ENCODE measurements at regions of chr11 and their contacts with region 1.

Region 1: GRCh38 chr11:2888266-2888968 is 2.8 kb upstream of the CDKN1C start:
- DNase-seq: peak; percentile 97
- H3K4me3 ChIP-seq: peak overlapping the region in 1 of 8 donors; percentile 4
- H3K27ac ChIP-seq: no peak overlapping the region
- H3K4me1 ChIP-seq: peaks cover 14 to 80% (median 57%) of the 10 kb centered on the region in 6 donors
- H3K27me3 ChIP-seq: peaks cover 0 to 30% (median 11%) of the 10 kb centered on the region in 7 donors
- CTCF ChIP-seq: peak; percentile 90 to 99 (median 98)
- POLR2A ChIP-seq: no peak

Region 2: DNA sequence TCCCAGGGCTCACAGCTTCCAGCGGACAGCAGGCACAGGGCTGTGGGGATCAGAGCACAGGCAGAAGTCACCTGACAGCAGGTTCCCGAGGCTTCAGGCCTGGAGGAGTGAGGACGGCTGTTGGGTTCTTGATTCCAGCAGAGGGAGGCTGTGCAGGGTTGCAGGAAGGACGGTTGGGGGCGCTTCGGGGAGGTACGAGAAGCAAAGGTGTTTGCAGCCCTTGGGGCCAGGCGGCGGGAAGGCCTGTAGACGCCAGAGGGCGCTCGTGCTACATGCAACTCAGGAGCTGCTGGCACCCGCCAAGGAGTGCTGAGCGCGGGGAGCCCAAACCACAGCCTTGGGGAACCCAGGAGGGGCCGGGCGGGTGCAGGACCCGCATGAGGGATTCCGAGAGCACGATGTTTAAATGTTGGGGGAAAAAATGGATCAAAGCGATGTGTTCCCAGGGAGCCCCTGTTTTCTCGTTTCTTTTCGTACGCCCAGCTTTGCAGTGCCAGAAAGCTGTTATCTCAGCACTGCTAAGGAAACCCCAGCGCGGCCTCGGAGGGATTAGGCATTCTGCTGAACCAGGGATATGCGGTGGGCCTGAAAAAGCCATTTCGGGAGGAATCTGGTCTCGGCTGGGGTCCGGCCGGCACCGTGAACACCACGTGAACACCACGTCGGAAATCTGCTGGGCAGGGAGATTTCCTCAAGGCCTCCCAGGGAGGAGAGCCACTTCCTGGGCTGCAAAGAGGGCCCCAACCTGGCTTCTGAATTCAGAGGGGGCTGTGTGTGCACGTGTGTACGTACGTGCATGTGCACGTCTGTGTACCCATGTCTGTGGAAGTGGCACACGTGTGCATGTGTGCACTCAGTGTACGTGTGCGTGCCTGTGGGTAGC is 355.5 kb before region 1 on chr11:
- intact Hi-C with region 1: loop called (anchors 2 kb)
- DNase-seq: peak; percentile 98
- H3K4me3 ChIP-seq: peak overlapping the region in 6 of 8 donors; percentile 5 to 46 (median 19)
- H3K27ac ChIP-seq: peak overlapping the region in 1 of 8 donors; percentile 12
- H3K4me1 ChIP-seq: peaks cover 14 to 35% (median 27%) of the 10 kb centered on the region in 6 donors
- H3K27me3 ChIP-seq: no peaks in the 10 kb centered on the region
- CTCF ChIP-seq: peak; percentile 97 to 100 (median 99)
- POLR2A ChIP-seq: no peak

Region 3: GRCh38 chr11:2846056-2846455 is 42.4 kb before region 1 on chr11:
- intact Hi-C with region 1: no loop called
- DNase-seq: no peak
- H3K4me3 ChIP-seq: no peak overlapping the region
- H3K27ac ChIP-seq: no peak overlapping the region
- H3K4me1 ChIP-seq: peaks cover 0 to 7% (median 0%) of the 10 kb centered on the region in 6 donors
- H3K27me3 ChIP-seq: no peaks in the 10 kb centered on the region
- CTCF ChIP-seq: no peak
- POLR2A ChIP-seq: no peak